A673 (cell line): ENCODE measurements at regions of chr3 and their contacts with region 1.

Region 1: DNA sequence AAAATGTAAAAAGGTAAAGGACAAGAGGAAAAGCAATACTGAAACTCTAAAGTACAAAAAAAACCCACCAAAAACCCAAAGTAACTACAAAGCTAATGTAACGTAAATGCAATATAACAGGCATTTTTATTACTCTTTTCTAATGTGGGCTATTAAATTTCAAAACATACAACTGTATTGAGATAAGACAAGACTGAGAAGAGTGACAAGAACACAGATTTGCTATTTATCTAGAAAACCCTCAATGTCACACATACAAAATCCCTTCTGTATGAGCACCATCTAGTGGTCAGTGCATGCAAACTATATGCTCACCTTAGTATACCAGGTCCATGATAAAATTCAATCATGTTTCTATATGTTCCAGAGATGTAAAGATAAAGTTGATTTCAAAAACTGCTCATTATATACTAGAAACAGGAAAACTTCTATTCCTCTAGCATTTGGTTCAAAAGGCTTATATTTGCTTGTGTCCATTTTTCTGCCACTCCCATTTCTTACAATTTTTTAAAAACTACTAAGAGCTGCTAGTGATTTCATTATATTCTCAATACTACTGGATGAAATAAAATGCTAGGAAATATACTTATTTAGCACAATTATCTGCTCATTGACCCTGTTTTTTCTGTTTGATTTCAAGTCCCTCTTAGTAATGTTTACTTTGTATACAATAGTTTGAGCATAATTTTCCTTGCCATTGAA is 111.4 kb downstream of the DLG1 start:
- DNase-seq: peak; percentile 81
- H3K4me3 ChIP-seq: no peak overlapping the region
- H3K27ac ChIP-seq: no peak overlapping the region
- H3K4me1 ChIP-seq: peaks cover 5% of the 10 kb centered on the region
- H3K27me3 ChIP-seq: no peaks in the 10 kb centered on the region
- CTCF ChIP-seq: peak; percentile 87

Region 2: GRCh38 chr3:196979545-196979944 is 207.5 kb before region 1 on chr3:
- CTCF ChIA-PET with region 1: no interaction called
- POLR2A ChIA-PET with region 1: no interaction called
- intact Hi-C with region 1: loop called (anchors 2 kb)
- DNase-seq: no peak
- H3K4me3 ChIP-seq: no peak overlapping the region
- H3K27ac ChIP-seq: no peak overlapping the region
- H3K4me1 ChIP-seq: no peaks in the 10 kb centered on the region
- H3K27me3 ChIP-seq: no peaks in the 10 kb centered on the region
- CTCF ChIP-seq: no peak

Region 3: GRCh38 chr3:197002701-197003454 is 184.2 kb before region 1 on chr3:
- CTCF ChIA-PET with region 1: no interaction called
- POLR2A ChIA-PET with region 1: no interaction called
- intact Hi-C with region 1: loop called (anchors 2 kb)
- DNase-seq: peak; percentile 88
- H3K4me3 ChIP-seq: peak overlapping the region; percentile 60
- H3K27ac ChIP-seq: peak overlapping the region; percentile 82
- H3K4me1 ChIP-seq: peaks cover 22% of the 10 kb centered on the region
- H3K27me3 ChIP-seq: no peaks in the 10 kb centered on the region
- CTCF ChIP-seq: peak; percentile 52; the same call in 1 of the 2 replicates

Region 4: GRCh38 chr3:197050511-197050910 is 136.5 kb before region 1 on chr3:
- CTCF ChIA-PET with region 1: no interaction called
- POLR2A ChIA-PET with region 1: no interaction called
- intact Hi-C with region 1: loop called (anchors 10 kb)
- DNase-seq: no peak
- H3K4me3 ChIP-seq: no peak overlapping the region
- H3K27ac ChIP-seq: no peak overlapping the region
- H3K4me1 ChIP-seq: no peaks in the 10 kb centered on the region
- H3K27me3 ChIP-seq: no peaks in the 10 kb centered on the region
- CTCF ChIP-seq: no peak

Region 5: DNA sequence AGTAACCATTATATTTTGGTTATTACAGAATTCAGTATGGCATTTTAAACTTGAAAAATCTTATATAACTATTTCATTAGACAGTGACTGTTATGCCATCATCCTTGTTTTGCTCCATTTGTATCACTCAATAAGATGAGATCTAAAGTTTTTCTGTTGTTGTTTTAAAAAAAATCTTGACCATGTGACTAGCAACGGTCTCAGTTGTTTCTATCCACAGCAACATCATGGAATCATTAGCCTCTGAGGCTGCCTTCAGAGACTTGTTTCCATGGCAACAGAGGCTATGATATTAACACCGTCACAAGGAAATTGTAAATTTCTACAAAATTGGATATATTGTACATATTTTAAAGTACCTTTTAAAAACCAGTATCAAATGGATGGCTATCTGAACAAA is 18.4 kb before region 1 on chr3:
- CTCF ChIA-PET with region 1: no interaction called
- POLR2A ChIA-PET with region 1: no interaction called
- intact Hi-C with region 1: no loop called
- DNase-seq: peak; percentile 37
- H3K4me3 ChIP-seq: no peak overlapping the region
- H3K27ac ChIP-seq: no peak overlapping the region
- H3K4me1 ChIP-seq: no peaks in the 10 kb centered on the region
- H3K27me3 ChIP-seq: no peaks in the 10 kb centered on the region
- CTCF ChIP-seq: no peak